ENCODE measurements at regions of chr2 and their contacts with region 1.

Region 1: GRCh38 chr2:186101616-186102015 is 363.0 kb downstream of the FSIP2 start:
- DNase-seq: no peak
- ATAC-seq: no peak
- H3K4me3 ChIP-seq: no peak overlapping the region
- H3K4me3 Mint-ChIP-seq: no peak overlapping the region
- H3K27ac ChIP-seq: no peak overlapping the region
- H3K27ac Mint-ChIP-seq: no peak overlapping the region
- H3K4me1 ChIP-seq: no peaks in the 10 kb centered on the region
- H3K4me1 Mint-ChIP-seq: no peaks in the 10 kb centered on the region
- H3K27me3 ChIP-seq: no peaks in the 10 kb centered on the region
- H3K27me3 Mint-ChIP-seq: no peaks in the 10 kb centered on the region
- CTCF ChIP-seq: no peak

Region 2: DNA sequence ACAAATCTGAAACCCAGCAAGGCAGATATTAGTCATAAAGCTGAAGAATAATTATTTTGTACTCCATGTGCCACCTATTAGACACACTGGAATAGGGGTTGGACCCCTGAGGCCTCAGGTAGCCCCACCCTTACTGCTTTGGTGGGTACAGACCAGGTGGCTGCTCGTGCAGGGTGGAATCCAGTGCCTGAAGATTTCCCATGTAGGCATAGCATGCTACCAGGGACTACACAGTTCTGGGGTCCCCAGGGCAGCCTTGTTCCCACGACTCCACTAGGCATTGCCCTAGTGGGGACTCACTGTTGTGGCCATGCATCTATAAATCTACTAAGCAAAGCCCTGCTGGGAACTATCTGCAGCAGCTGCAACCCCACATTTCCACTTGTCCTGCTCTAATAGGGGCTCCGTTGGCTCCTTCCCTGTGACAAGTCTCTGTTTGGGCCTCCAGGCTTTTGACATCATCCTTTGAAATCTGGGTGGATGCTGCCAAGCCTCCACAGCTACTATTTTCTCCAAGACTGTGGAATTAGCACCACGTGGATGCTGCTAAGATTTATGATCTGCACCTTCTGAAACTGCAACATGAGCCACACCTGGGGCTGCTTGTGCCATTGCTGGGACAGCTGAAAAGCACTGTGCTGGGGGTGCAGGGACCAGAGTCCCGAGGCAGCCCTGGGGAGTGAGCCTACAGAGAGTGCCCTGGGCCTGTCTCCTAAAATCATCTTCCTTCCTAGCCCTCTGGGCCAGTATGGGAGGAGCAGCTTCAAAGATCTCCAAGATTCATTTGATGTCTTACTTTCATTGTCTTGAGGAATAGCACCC is 59.2 kb before region 1 on chr2:
- CTCF ChIA-PET with region 1: no interaction called
- POLR2A ChIA-PET with region 1: no interaction called
- intact Hi-C with region 1: no loop called
- DNase-seq: no peak
- ATAC-seq: no peak
- H3K4me3 ChIP-seq: no peak overlapping the region
- H3K4me3 Mint-ChIP-seq: no peak overlapping the region
- H3K27ac ChIP-seq: no peak overlapping the region
- H3K27ac Mint-ChIP-seq: no peak overlapping the region
- H3K4me1 ChIP-seq: no peaks in the 10 kb centered on the region
- H3K4me1 Mint-ChIP-seq: no peaks in the 10 kb centered on the region
- H3K27me3 ChIP-seq: no peaks in the 10 kb centered on the region
- H3K27me3 Mint-ChIP-seq: no peaks in the 10 kb centered on the region
- CTCF ChIP-seq: no peak

Region 3: GRCh38 chr2:186113284-186113683 is 11.7 kb after region 1 on chr2:
- CTCF ChIA-PET with region 1: no interaction called
- POLR2A ChIA-PET with region 1: no interaction called
- intact Hi-C with region 1: loop called in 1 of 2 experiments (anchors 1 kb)
- DNase-seq: no peak
- ATAC-seq: no peak
- H3K4me3 ChIP-seq: no peak overlapping the region
- H3K4me3 Mint-ChIP-seq: no peak overlapping the region
- H3K27ac ChIP-seq: no peak overlapping the region
- H3K27ac Mint-ChIP-seq: no peak overlapping the region
- H3K4me1 ChIP-seq: no peaks in the 10 kb centered on the region
- H3K4me1 Mint-ChIP-seq: peaks cover 10% of the 10 kb centered on the region
- H3K27me3 ChIP-seq: no peaks in the 10 kb centered on the region
- H3K27me3 Mint-ChIP-seq: no peaks in the 10 kb centered on the region
- CTCF ChIP-seq: no peak